Activated CD4-positive, alpha-beta memory T cell treated with anti-CD3 and anti-CD28 coated beads, Interleukin-2, amount 10 ng/mL, durations not matched to agents 7 days and 5 days (primary cell): ENCODE measurements at regions of chr14 and their contacts with region 1.

Region 1: GRCh38 chr14:20690848-20691523 is 2.4 kb downstream of the ANG start:
- DNase-seq: peak; percentile 42
- H3K4me3 Mint-ChIP-seq: no peak overlapping the region
- H3K27ac Mint-ChIP-seq: peak overlapping the region; percentile 41
- H3K4me1 Mint-ChIP-seq: peaks cover 37% of the 10 kb centered on the region
- H3K27me3 Mint-ChIP-seq: no peaks in the 10 kb centered on the region

Region 2: DNA sequence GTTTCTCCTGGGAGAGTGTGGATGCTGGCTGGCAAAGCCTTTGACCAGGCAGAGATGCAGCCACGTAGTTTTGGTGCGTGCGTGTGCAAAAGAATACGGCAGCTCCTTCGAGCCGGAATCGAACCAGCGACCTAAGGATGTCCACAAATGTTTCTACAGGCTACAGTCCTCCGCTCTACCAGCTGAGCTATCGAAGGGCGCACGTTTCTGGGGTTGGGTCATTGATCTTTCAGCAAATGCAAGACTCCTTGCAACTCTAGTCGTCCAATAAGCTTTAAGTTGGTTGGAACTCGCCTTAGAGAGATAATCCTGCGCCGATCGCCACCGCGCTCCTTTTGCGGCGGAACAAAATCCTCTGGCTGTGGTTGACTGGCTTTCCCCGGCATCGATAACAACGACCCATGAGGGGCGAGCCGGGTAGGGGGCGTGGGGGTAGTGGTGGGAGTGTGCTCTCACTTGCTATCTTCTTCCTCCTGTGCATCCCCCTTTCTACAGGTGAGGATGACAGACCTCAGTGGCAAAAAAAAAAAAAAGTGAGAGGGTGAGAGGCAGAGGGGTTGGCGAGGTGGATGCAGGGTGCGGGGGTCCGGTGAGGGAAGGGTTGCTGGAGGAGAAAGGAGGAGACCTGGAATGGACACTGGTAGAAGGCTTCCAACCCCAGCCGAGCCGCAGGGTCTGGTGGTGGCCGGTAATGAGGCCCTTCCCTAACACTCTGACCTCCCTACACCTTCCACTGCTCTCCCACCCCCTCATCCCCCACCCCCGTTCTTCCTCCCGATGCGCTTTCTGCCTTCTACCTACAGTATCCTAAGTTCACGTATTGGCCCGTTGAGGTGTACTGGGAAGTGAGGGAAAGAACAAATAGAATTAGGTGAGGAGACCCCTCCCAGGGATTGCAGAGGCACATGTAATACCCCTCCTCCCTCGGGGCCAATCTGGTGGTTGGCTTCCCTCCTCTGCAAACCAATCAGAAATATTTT is 37.7 kb before region 1 on chr14:
- CTCF ChIA-PET with region 1: interaction called, 179 read pairs
- POLR2A ChIA-PET with region 1: no interaction called
- DNase-seq: peak; percentile 63
- H3K4me3 Mint-ChIP-seq: peak overlapping the region; percentile 48
- H3K27ac Mint-ChIP-seq: no peak overlapping the region
- H3K4me1 Mint-ChIP-seq: peaks cover 30% of the 10 kb centered on the region
- H3K27me3 Mint-ChIP-seq: peaks cover 67% of the 10 kb centered on the region

Region 3: DNA sequence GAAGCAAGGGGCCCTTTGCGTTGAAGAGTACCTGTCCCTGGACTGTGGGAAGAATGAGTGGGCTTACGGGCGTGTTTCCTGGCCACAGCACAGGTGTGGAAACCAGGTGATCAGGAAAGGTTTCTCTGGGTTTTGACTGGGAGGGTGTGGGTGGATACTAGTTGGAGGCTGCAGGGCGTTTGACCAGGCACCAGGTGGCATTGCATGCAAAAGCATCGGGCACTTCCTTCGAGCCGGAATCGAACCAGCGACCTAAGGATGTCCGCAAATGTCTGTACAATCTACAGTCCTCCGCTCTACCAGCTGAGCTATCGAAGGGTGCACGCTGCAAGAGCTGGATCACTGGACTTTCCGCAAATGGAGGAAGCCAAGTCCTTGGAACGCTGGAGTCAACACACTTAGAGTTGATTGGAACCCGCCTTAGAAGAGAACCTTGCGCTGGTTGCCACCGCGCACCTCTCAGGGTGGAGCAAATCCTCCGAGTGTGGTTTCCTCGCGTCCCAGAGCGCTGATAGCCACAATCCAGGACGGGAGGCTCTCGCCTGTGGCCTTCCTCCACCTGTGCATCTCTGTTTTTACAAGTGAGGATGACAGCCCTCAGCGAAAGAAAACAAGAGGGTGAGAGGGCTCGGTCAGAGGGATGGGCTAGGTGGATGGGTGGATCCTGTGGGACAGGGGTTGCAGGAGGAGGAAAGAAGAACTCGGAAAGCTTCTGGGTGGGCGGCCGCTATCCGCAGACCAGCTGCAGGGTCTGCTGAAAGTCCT is 27.8 kb before region 1 on chr14:
- CTCF ChIA-PET with region 1: interaction called, 179 read pairs
- POLR2A ChIA-PET with region 1: interaction called, 8 read pairs
- DNase-seq: peak; percentile 87
- H3K4me3 Mint-ChIP-seq: peak overlapping the region; percentile 76
- H3K27ac Mint-ChIP-seq: peak overlapping the region; percentile 27
- H3K4me1 Mint-ChIP-seq: peaks cover 57% of the 10 kb centered on the region
- H3K27me3 Mint-ChIP-seq: peaks cover 7% of the 10 kb centered on the region

Region 4: DNA sequence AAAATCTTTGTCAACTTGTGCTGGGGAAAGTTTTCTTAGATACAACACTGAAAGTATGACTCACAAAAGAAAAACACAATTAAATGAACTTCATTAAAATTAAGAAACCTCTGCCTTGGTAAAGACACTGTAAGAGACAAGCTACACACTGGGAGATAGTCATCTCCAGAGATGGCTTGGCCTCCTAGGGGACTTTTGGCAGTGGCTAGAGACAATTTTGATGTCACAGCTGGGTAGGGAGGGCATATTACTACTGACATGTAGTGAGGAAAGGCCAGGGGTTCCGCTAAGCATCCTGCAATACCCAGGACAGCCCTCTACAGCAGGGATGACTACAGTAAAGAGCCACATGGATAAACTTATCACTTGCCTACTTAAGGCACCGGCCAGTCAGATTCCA is 15.3 kb before region 1 on chr14:
- CTCF ChIA-PET with region 1: interaction called, 37 read pairs
- POLR2A ChIA-PET with region 1: interaction called, 19 read pairs
- DNase-seq: no peak
- H3K4me3 Mint-ChIP-seq: no peak overlapping the region
- H3K27ac Mint-ChIP-seq: no peak overlapping the region
- H3K4me1 Mint-ChIP-seq: peaks cover 24% of the 10 kb centered on the region
- H3K27me3 Mint-ChIP-seq: no peaks in the 10 kb centered on the region

Region 5: DNA sequence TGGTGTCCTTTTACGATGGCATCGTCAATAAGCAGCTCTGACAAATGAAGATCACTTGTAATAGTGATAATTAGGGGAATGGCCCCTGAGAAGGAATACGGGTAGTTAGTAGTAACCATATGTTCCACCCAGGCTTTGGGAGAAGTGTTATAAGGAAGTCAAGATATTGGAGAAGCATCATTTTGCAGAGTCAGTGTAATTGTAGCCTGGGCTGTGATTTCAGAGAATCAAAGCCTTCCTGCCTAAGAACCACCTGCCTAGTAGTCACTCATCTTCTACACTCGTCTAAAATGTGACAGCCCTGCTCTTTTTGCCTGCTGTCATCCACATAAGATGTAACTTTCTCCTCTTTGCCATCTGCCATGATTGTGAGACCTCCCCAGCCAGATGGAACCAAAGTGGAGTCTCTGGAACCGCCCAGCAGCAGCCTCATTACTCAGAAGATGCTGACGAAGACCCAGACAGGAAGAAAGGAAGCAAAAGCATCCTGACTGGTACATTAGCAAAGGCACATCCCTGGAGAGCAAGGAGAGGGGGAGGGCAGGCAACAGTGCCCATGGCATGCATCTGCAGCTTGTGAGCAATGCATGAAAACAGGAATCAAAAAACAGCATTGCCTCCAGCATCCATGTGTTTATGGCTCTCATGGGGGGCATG is 42.1 kb after region 1 on chr14:
- CTCF ChIA-PET with region 1: no interaction called
- POLR2A ChIA-PET with region 1: no interaction called
- DNase-seq: no peak
- H3K4me3 Mint-ChIP-seq: no peak overlapping the region
- H3K27ac Mint-ChIP-seq: no peak overlapping the region
- H3K4me1 Mint-ChIP-seq: no peaks in the 10 kb centered on the region
- H3K27me3 Mint-ChIP-seq: peaks cover 4% of the 10 kb centered on the region